CD8-positive, alpha-beta memory T cell (primary cell): ENCODE measurements at regions of chr14 and their contacts with region 1.

Region 1: DNA sequence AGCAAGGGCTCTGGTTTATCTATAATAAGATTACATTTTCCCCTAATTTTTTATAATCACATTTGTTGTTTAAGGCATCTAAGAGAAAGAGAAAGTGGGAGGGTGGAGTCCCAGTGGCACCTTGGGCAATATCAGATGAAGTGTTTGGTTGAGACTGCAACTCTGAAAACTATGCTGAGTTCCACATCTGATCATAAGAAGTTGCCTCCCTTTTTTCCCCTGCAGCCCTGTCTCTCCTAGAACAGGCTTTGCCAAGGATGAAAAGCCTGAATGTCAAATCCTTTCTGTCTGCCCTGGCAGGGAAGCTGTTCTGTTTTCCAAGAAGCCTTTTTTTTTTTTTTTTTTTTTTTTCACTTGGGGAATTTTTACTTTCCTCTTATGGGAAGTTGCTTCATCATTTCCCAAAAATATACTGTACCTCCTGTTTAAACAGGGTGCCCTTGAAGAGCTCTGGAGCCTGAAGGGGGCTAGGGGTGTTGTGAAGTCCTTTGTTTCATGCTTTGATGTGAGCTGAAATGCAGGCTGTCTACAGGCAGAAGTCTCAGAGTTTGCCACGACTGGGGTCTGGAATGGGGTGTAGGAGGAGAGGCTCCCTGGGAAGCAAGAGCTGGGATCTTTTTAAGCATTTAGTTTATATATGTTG is 71.3 kb downstream of the SUSD6 start:
- DNase-seq: no peak
- H3K4me3 ChIP-seq: no peak overlapping the region
- H3K4me3 Mint-ChIP-seq: peak overlapping the region in 6 of 7 donors; percentile 0 to 54 (median 30)
- H3K27ac ChIP-seq: no peak overlapping the region
- H3K27ac Mint-ChIP-seq: peak overlapping the region; percentile 17 to 85 (median 61)
- H3K4me1 ChIP-seq: peaks cover 59% of the 10 kb centered on the region
- H3K4me1 Mint-ChIP-seq: peaks cover 64 to 80% (median 75%) of the 10 kb centered on the region in 3 donors
- H3K27me3 ChIP-seq: no peaks in the 10 kb centered on the region
- H3K27me3 Mint-ChIP-seq: no peaks in the 10 kb centered on the region

Region 2: GRCh38 chr14:69629225-69630127 is 53.3 kb before region 1 on chr14:
- CTCF ChIA-PET with region 1: no interaction called
- POLR2A ChIA-PET with region 1: interaction called, 13 read pairs
- DNase-seq: no peak
- H3K4me3 ChIP-seq: no peak overlapping the region
- H3K4me3 Mint-ChIP-seq: peak overlapping the region in 6 of 7 donors; percentile 7 to 65 (median 54)
- H3K27ac ChIP-seq: no peak overlapping the region
- H3K27ac Mint-ChIP-seq: peak overlapping the region in 7 of 8 donors; percentile 32 to 91 (median 85)
- H3K4me1 ChIP-seq: peaks cover 83% of the 10 kb centered on the region
- H3K4me1 Mint-ChIP-seq: peaks cover 87 to 100% (median 97%) of the 10 kb centered on the region in 3 donors
- H3K27me3 ChIP-seq: no peaks in the 10 kb centered on the region
- H3K27me3 Mint-ChIP-seq: no peaks in the 10 kb centered on the region

Region 3: DNA sequence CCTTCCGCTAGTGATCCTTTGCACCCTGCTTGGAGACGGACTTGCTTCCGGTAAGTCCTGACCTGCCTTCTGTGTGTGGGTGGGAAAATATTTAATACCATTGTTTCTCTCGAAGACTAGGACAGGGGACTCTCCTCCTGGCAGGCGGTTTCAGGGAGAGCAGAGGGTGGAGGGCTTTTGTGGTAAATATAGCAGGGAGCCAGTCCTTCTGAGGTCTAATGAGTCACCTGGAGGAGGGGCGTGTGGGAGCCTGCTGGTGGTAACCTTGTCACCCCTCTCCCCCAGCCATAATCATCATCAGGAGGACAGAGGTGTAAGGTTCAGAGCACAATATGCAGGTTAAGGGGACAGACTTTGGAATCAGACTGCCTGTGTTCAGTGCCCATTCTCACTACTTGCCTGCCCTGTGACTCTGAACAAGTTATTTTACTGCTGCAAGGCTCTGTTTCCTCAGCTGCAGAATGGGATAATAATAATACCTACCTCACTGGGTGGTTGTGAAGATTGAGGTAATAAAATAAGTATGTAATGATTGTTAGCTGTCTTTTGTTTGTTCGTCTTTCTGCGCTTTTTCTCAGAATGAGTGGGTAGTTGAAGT is 24.0 kb before region 1 on chr14:
- CTCF ChIA-PET with region 1: no interaction called
- POLR2A ChIA-PET with region 1: no interaction called
- DNase-seq: no peak
- H3K4me3 ChIP-seq: no peak overlapping the region
- H3K4me3 Mint-ChIP-seq: peak overlapping the region in 1 of 7 donors; percentile 25
- H3K27ac ChIP-seq: peak overlapping the region; percentile 12
- H3K27ac Mint-ChIP-seq: peak overlapping the region in 7 of 8 donors; percentile 0 to 95 (median 52)
- H3K4me1 ChIP-seq: peaks cover 25% of the 10 kb centered on the region
- H3K4me1 Mint-ChIP-seq: peaks cover 73 to 96% (median 90%) of the 10 kb centered on the region in 3 donors
- H3K27me3 ChIP-seq: no peaks in the 10 kb centered on the region
- H3K27me3 Mint-ChIP-seq: peaks cover 0 to 1% of the 10 kb centered on the region in 2 donors